PC-9 (cell line): ENCODE measurements at regions of chr4 and their contacts with region 1.

Region 1: GRCh38 chr4:149949381-149949780 is 128.9 kb upstream of the DCLK2 start:
- DNase-seq: no peak
- H3K4me3 ChIP-seq: no peak overlapping the region
- H3K27ac ChIP-seq: no peak overlapping the region
- H3K4me1 ChIP-seq: no peaks in the 10 kb centered on the region
- H3K27me3 ChIP-seq: no peaks in the 10 kb centered on the region
- CTCF ChIP-seq: no peak

Region 2: DNA sequence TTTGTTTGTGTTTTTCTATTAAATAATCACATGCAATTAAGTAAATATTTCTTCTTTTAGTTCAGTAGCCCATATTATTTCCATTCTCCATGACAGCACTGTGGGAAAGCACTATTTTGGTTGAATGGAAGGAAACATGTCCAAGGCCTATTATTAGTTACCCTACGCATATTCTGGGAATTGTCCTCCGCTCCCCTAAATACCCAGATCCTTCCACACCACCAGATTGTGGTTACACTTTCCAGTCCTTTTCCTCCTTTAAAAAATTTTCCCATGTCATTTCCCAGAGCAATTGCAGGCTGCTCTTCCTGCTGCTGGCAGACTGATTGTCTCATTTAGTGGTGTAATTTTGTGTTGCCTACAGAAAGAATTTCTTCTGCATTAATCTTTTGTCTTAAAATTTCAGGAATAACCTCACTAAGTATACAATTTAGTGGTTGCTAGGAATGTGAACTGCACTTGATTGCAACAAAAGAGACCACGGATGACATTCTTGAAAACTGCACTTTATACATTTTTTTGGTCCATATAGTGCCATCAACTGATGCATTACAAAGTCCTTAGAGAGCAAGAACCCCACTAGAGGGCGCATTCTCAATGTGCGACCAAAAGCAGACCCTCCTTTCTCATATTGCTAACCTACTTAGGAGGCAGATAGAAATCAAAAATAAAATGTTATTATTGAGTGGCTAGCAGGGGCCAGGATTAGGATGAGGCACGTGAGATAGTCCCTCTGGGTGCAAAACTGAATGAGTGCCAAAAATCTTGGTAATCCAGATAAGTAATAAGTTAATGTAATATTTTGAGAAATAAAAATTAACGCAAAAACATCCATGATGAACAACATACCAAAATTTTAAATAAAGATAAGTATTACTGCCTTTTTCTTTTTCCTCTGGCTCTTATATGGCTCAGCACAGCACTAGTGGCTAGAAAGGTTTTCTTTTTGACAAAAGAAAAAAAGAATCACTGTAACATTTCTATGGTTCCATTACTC is 35.0 kb before region 1 on chr4:
- CTCF ChIA-PET with region 1: no interaction called
- POLR2A ChIA-PET with region 1: no interaction called
- intact Hi-C with region 1: loop called (anchors 2 kb)
- DNase-seq: peak in 1 of 2 experiments; percentile 37
- H3K4me3 ChIP-seq: no peak overlapping the region
- H3K27ac ChIP-seq: no peak overlapping the region
- H3K4me1 ChIP-seq: no peaks in the 10 kb centered on the region
- H3K27me3 ChIP-seq: no peaks in the 10 kb centered on the region
- CTCF ChIP-seq: peak; percentile 78